Lower lobe of right lung (tissue), 2 donors: ENCODE measurements at regions of chr20 and their contacts with region 1.

Region 1: DNA sequence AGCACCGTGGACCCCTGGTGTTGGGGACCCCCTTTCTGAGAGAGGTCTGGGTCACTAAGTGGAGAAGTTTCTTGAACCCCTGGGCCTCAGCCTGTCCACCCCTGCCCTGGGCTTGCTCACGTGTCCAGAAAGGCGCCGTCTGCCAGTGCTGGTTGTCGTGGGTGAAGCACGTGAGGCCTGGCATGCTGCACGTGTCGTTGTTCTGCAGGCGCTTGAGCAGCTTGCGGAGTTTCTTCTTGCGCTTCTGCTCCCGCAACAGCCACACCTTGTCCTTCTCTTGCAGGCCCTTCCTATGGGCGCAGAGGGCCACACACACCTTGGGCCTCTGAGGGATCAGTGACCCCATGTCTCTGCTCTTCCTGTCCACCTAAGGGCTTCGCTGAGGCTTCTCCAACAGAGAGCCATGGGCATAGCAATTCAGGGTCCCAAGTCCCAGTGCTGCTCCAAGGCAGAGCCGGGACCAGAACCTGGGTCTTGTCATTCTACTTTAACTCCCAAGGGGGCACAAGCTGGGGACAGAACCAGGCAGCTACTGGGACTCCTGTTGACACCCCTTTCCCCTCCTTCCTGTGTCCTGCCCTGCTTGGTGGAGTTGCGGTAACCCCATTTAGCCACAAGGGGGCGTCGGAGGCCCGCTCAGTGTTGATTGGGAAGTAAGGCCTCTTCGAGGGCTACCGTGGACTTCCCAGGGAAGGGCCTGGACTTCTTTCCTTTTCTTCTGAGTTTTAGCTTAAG is 121.8 kb downstream of the SULF2 start:
- DNase-seq: peak; percentile 83
- ATAC-seq: peak; percentile 87 to 88
- H3K4me3 ChIP-seq: no peak overlapping the region
- H3K27ac ChIP-seq: no peak overlapping the region
- H3K4me1 ChIP-seq: peaks cover 12% of the 10 kb centered on the region
- H3K27me3 ChIP-seq: no peaks in the 10 kb centered on the region
- CTCF ChIP-seq: peak; percentile 98

Region 2: GRCh38 chr20:45735552-45735951 is 1927.9 kb before region 1 on chr20:
- intact Hi-C with region 1: no loop called
- DNase-seq: no peak
- ATAC-seq: no peak
- H3K4me3 ChIP-seq: no peak overlapping the region
- H3K27ac ChIP-seq: no peak overlapping the region
- H3K4me1 ChIP-seq: no peaks in the 10 kb centered on the region
- H3K27me3 ChIP-seq: no peaks in the 10 kb centered on the region
- CTCF ChIP-seq: no peak

Region 3: GRCh38 chr20:47725248-47725973 is 61.9 kb after region 1 on chr20:
- intact Hi-C with region 1: no loop called
- DNase-seq: peak; percentile 76
- ATAC-seq: peak; percentile 64 to 76
- H3K4me3 ChIP-seq: no peak overlapping the region
- H3K27ac ChIP-seq: no peak overlapping the region
- H3K4me1 ChIP-seq: peaks cover 25% of the 10 kb centered on the region
- H3K27me3 ChIP-seq: no peaks in the 10 kb centered on the region
- CTCF ChIP-seq: peak; percentile 87

Region 4: GRCh38 chr20:47785854-47786764 is 122.6 kb after region 1 on chr20:
- intact Hi-C with region 1: no loop called
- DNase-seq: no peak
- ATAC-seq: peak; percentile 76 to 81
- H3K4me3 ChIP-seq: peak overlapping the region; percentile 59
- H3K27ac ChIP-seq: peak overlapping the region; percentile 58
- H3K4me1 ChIP-seq: peaks cover 37% of the 10 kb centered on the region
- H3K27me3 ChIP-seq: peaks cover 39% of the 10 kb centered on the region
- CTCF ChIP-seq: peak; percentile 58

Region 5: GRCh38 chr20:47985092-47985850 is 321.8 kb after region 1 on chr20:
- intact Hi-C with region 1: no loop called
- DNase-seq: no peak
- ATAC-seq: peak in 1 of 2 donors; percentile 85
- H3K4me3 ChIP-seq: no peak overlapping the region
- H3K27ac ChIP-seq: no peak overlapping the region
- H3K4me1 ChIP-seq: peaks cover 5% of the 10 kb centered on the region
- H3K27me3 ChIP-seq: peaks cover 6% of the 10 kb centered on the region
- CTCF ChIP-seq: no peak

Region 6: GRCh38 chr20:48620519-48621254 is 957.2 kb after region 1 on chr20:
- intact Hi-C with region 1: loop called (anchors 5 kb)
- DNase-seq: peak; percentile 89
- ATAC-seq: peak; percentile 93 to 95
- H3K4me3 ChIP-seq: peak overlapping the region; percentile 22
- H3K27ac ChIP-seq: no peak overlapping the region
- H3K4me1 ChIP-seq: peaks cover 22% of the 10 kb centered on the region
- H3K27me3 ChIP-seq: no peaks in the 10 kb centered on the region
- CTCF ChIP-seq: peak; percentile 81